HCT116 (cell line): ENCODE measurements at regions of chr6 and their contacts with region 1.

Region 1: GRCh38 chr6:45714741-45715507 is 300.7 kb downstream of the CLIC5 start:
- DNase-seq: peak; percentile 73
- ATAC-seq: peak; percentile 98
- H3K4me3 ChIP-seq: no peak overlapping the region
- H3K27ac ChIP-seq: no peak overlapping the region
- H3K4me1 ChIP-seq: peaks cover 0 to 4% of the 10 kb centered on the region in 2 experiments; a peak in 2 of 4 replicates
- H3K27me3 ChIP-seq: no peaks in the 10 kb centered on the region
- CTCF ChIP-seq: peak; percentile 78 to 81 (median 80)
- POLR2A ChIP-seq: no peak
- RAD21 ChIP-seq: peak; percentile 93

Region 2: GRCh38 chr6:44655412-44656342 is 1059.2 kb before region 1 on chr6:
- CTCF ChIA-PET with region 1: interaction called, 67 read pairs
- POLR2A ChIA-PET with region 1: no interaction called
- RAD21 ChIA-PET with region 1: interaction called, 7 to 8 read pairs
- intact Hi-C with region 1: loop called (anchors 1 kb)
- DNase-seq: peak; percentile 23
- ATAC-seq: peak; percentile 92
- H3K4me3 ChIP-seq: peak overlapping the region in 1 of 2 experiments; percentile 25; a peak in 1 of 4 replicates
- H3K27ac ChIP-seq: no peak overlapping the region
- H3K4me1 ChIP-seq: peaks cover 0 to 8% of the 10 kb centered on the region in 2 experiments; a peak in 2 of 4 replicates
- H3K27me3 ChIP-seq: no peaks in the 10 kb centered on the region
- CTCF ChIP-seq: peak; percentile 69 to 98 (median 93); a peak in 5 of 6 replicates
- POLR2A ChIP-seq: no peak
- RAD21 ChIP-seq: peak; percentile 97

Region 3: GRCh38 chr6:45163952-45164766 is 550.8 kb before region 1 on chr6:
- CTCF ChIA-PET with region 1: no interaction called
- POLR2A ChIA-PET with region 1: no interaction called
- RAD21 ChIA-PET with region 1: no interaction called
- intact Hi-C with region 1: no loop called
- DNase-seq: peak; percentile 73
- ATAC-seq: peak; percentile 93
- H3K4me3 ChIP-seq: 0 out of 4 replicates have a peak overlapping the region, but pooled peaks of 1 of the 2 experiments have one; percentile 25
- H3K27ac ChIP-seq: no peak overlapping the region
- H3K4me1 ChIP-seq: peaks cover 11 to 16% of the 10 kb centered on the region in 2 experiments
- H3K27me3 ChIP-seq: no peaks in the 10 kb centered on the region
- CTCF ChIP-seq: no peak
- POLR2A ChIP-seq: no peak
- RAD21 ChIP-seq: peak; percentile 5; the same call in 1 of the 2 replicates

Region 4: DNA sequence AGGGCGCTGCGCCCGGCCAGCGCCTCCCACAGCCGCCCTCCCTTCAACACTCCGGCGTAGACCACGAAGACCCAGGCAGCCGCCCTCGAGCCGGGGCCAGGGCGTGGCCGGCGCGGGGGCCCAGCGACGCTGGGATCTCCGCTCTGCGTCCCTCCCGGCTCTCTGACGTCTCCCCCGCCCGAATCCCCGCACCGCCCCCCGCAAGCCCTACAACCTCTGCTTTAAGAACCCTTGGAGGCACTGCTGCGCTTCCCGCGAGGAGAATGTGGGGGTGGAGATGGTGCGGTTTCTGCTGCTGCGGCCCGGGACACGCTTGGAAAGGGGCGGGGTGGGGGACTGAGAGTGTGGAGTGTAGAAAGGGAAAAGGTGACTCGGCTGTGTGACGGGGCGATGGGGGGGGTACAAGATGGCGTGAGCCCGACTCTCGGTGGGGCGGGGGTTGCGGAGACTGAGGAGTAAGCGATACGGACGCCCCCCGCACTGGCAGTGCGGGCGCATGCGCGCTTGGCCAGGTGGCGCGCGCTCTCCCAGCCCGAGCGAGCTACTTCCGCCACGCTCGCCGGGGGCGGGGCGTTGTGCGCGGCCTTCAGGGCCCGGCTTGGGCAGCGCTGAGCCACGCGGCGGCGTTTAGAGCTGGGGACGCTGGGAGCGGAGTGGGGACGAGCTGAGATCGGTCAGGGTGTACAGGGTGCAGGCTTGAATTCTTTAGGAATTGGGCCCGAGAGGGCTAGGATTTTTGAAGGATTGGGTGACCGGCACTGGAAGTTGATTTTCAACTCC is 337.2 kb before region 1 on chr6 and contains the start of gene SUPT3H:
- CTCF ChIA-PET with region 1: interaction called, 10 read pairs
- POLR2A ChIA-PET with region 1: interaction called, 3 read pairs
- RAD21 ChIA-PET with region 1: no interaction called
- intact Hi-C with region 1: loop called (anchors 5 kb)
- DNase-seq: peak; percentile 83
- ATAC-seq: peak; percentile 89
- H3K4me3 ChIP-seq: peak within 1 kb of the TSS; percentile 68 to 81
- H3K27ac ChIP-seq: peak within 1 kb of the TSS; percentile 78
- H3K4me1 ChIP-seq: peaks cover 6 to 20% of the 10 kb centered on the region in 2 experiments; a peak in 3 of 4 replicates
- H3K27me3 ChIP-seq: no peaks in the 10 kb centered on the region
- CTCF ChIP-seq: 0 out of 6 replicates have a peak, but pooled peaks of 1 of the 3 experiments have one; percentile 10
- POLR2A ChIP-seq: peak; percentile 90
- RAD21 ChIP-seq: peak; percentile 38
- total RNA-seq, gene SUPT3H: 7.4 TPM

Region 5: DNA sequence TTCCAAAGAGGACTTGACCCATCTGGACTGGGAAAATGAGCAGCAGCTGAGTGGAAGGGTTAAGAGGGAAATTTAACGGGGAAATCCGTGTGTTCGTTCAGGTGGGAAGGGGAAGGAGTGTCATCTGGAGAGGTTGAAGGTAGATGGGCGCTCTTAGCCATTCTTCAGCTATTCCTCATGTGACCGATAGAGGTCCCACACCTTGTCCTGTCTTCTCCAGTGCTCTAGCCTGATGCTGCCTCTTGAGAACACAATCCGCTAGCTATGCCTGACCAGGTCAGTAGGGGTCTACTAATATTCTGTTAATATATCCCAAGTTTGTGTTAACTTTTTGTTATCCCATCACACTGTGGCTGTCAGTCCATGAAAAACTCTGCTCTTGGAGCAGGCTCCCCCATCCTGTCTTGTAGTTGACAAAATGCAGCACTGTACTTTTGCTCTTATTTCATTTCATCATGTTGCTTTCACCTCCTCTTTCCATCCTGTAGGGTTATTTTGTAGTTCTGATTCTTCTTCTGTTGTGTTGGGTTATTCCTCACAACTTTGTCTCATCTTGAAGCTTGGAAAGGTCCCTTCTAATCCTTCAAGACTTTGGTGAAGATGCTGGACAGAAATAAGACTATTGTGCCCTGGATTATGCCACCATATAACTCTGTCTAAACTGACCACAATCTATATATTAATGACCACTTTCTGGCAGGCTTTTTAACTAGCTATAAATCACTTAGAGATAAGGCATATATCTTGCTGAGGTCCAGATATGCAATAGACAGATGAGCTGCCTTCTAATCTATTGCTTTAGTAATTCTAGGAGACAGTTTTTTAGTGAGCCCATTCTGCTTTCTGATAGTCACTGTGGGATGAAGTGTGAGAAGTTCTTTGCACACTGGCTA is 213.8 kb before region 1 on chr6:
- CTCF ChIA-PET with region 1: interaction called, 10 read pairs
- POLR2A ChIA-PET with region 1: no interaction called
- RAD21 ChIA-PET with region 1: interaction called, 4 to 7 read pairs
- intact Hi-C with region 1: loop called (anchors 1 kb)
- DNase-seq: peak; percentile 58
- ATAC-seq: peak; percentile 98
- H3K4me3 ChIP-seq: no peak overlapping the region
- H3K27ac ChIP-seq: no peak overlapping the region
- H3K4me1 ChIP-seq: peaks cover 9 to 17% of the 10 kb centered on the region in 2 experiments; a peak in 3 of 4 replicates
- H3K27me3 ChIP-seq: no peaks in the 10 kb centered on the region
- CTCF ChIP-seq: peak; percentile 51 to 74 (median 74)
- POLR2A ChIP-seq: no peak
- RAD21 ChIP-seq: peak; percentile 52

Region 6: DNA sequence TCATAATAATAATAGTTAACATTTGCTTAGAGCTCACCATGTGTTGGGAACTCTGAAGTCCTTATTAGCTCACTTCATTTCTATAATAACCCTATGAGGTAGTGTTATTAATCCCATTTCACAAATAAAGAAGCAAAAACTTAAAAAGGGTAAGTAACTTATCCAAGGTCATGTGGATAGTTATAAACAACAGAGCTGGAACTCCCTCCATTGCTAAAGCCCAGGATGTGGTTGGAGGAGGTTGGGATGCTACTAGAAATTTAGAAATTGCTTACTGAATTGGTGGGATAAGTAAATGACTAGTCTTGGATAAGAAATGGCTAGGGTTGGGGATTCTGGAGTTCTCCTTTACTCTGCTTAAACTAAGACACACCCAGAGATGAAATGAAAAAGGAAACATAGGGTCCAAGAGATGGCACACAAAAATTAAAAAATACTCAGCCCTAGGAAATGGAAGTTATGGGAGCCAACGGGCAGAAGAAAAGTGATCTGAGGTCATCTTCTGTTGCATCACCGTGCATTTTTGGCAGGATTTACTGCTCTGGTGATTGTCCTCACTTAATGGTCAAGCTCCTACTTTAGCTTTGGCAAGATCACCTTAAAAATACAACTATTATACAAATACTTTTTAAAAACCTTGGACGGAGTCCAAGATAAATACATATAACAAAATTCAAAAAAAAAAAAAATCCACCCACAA is 308.4 kb after region 1 on chr6:
- CTCF ChIA-PET with region 1: no interaction called
- POLR2A ChIA-PET with region 1: no interaction called
- RAD21 ChIA-PET with region 1: no interaction called
- intact Hi-C with region 1: no loop called
- DNase-seq: no peak
- ATAC-seq: no peak
- H3K4me3 ChIP-seq: no peak overlapping the region
- H3K27ac ChIP-seq: no peak overlapping the region
- H3K4me1 ChIP-seq: no peaks in the 10 kb centered on the region
- H3K27me3 ChIP-seq: no peaks in the 10 kb centered on the region
- CTCF ChIP-seq: no peak
- POLR2A ChIP-seq: no peak
- RAD21 ChIP-seq: no peak